Activated T-helper 1 cell treated with anti-CD3 and anti-CD28 coated beads, Interleukin-12 subunit alpha, Interleukin-12 subunit beta, Interleukin-2, Interleukin-4 antibody, amounts not matched to agents 30 ng/mL and 10 ng/mL and 1 ng/mL, durations not matched to agents 14 hours and 24 hours and 36 hours (primary cell): ENCODE measurements at regions of chr14 and their contacts with region 1.

Region 1: DNA sequence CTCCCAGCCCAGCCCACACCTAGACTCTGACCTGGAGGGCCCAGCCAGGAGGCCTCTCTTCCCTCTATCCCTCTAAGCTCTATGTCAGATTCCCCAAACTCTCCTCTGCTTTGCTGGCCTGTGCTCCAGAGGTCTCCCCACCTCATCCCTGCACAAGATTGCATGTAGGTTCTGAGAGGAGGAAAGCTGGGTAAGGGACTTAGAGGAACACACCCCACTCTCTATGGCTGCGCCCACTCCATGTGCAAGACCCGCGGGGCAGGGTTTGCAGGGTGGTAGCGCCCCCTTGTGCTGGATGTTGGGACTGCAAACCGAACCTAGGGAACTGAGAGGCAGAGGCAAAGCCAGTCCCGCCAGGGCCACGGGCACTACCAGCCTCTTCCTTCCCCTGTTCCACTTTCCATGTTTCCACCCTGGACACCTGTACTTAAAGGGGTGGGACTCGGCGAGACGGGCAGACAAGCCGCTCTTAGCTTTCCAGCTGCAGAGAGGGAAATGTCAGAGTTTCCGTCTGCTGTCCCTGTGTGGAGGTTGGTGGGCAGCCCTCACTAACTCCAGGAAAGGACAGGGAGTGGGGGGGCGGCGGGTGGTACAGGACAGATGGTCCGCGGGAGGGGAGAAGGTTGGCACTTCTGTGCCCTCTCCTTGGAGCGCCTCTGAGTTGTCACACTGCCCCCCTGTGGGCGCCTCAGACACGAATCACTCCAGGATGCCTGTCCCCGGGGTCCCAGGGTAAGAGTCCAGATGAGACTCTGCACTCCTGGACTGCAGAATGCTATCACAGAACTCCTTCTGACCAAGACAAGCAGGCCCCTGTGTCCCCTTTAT is 16.8 kb downstream of the MMP14 start:
- DNase-seq: peak; percentile 80
- H3K4me3 Mint-ChIP-seq: peak overlapping the region; percentile 81
- H3K27ac Mint-ChIP-seq: peak overlapping the region; percentile 82
- H3K4me1 Mint-ChIP-seq: peaks cover 42% of the 10 kb centered on the region
- H3K27me3 Mint-ChIP-seq: peaks cover 13% of the 10 kb centered on the region

Region 2: GRCh38 chr14:21868442-21869046 is 984.6 kb before region 1 on chr14:
- intact Hi-C with region 1: loop called (anchors 10 kb)
- DNase-seq: peak; percentile 72
- H3K4me3 Mint-ChIP-seq: peak overlapping the region; percentile 74
- H3K27ac Mint-ChIP-seq: peak overlapping the region; percentile 46
- H3K4me1 Mint-ChIP-seq: peaks cover 23% of the 10 kb centered on the region
- H3K27me3 Mint-ChIP-seq: peaks cover 5% of the 10 kb centered on the region

Region 3: DNA sequence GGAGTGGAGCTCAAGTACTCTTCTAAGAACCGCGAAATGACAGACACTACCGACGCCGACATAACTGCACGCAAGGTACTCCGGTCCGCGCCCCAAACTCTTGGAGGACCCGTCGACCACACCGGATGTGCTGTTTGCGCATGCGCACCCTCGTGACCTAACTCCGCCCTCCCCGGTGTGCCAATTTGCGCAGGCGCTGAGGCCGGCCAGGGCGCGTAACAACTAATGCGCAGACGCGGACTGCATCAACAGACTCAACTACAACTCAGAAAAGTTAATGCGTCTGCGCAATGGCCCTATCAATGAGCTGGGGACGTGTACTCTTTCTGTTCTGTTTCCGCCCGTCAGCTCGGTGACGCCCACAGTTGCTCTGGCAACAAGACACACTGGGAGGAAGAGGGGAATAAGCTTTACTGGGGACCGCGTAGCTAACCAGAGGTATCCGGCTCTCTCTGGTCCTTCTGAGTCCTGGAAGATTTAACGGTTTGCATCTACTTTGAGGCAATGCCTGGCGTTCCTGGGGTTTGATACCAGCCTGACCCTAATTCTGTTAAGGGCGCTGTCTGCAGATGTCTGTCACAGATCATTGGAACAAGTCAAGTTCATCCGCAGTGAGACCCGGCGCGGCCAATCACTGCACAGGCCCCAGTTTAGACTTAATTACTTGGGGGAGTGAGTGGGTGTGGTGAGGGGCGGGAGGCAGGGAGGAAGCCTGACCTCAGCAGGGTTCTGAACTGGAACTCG is 263.9 kb before region 1 on chr14 and contains the start of gene DAD1:
- intact Hi-C with region 1: loop called (anchors 5 kb)
- DNase-seq: peak; percentile 100
- H3K4me3 Mint-ChIP-seq: peak within 1 kb of the TSS; percentile 91
- H3K27ac Mint-ChIP-seq: peak within 1 kb of the TSS; percentile 96
- H3K4me1 Mint-ChIP-seq: peaks cover 55% of the 10 kb centered on the region
- H3K27me3 Mint-ChIP-seq: no peaks in the 10 kb centered on the region
- total RNA-seq, gene DAD1: 228 and 229 TPM in 2 replicates

Region 4: GRCh38 chr14:22715186-22715812 is 137.9 kb before region 1 on chr14:
- intact Hi-C with region 1: loop called (anchors 1 kb)
- DNase-seq: no peak
- H3K4me3 Mint-ChIP-seq: no peak overlapping the region
- H3K27ac Mint-ChIP-seq: no peak overlapping the region
- H3K4me1 Mint-ChIP-seq: peaks cover 17% of the 10 kb centered on the region
- H3K27me3 Mint-ChIP-seq: peaks cover 24% of the 10 kb centered on the region

Region 5: GRCh38 chr14:22822571-22823098 is 30.5 kb before region 1 on chr14:
- intact Hi-C with region 1: loop called (anchors 1 kb)
- DNase-seq: peak; percentile 52
- H3K4me3 Mint-ChIP-seq: peak overlapping the region; percentile 60
- H3K27ac Mint-ChIP-seq: no peak overlapping the region
- H3K4me1 Mint-ChIP-seq: peaks cover 35% of the 10 kb centered on the region
- H3K27me3 Mint-ChIP-seq: peaks cover 8% of the 10 kb centered on the region

Region 6: DNA sequence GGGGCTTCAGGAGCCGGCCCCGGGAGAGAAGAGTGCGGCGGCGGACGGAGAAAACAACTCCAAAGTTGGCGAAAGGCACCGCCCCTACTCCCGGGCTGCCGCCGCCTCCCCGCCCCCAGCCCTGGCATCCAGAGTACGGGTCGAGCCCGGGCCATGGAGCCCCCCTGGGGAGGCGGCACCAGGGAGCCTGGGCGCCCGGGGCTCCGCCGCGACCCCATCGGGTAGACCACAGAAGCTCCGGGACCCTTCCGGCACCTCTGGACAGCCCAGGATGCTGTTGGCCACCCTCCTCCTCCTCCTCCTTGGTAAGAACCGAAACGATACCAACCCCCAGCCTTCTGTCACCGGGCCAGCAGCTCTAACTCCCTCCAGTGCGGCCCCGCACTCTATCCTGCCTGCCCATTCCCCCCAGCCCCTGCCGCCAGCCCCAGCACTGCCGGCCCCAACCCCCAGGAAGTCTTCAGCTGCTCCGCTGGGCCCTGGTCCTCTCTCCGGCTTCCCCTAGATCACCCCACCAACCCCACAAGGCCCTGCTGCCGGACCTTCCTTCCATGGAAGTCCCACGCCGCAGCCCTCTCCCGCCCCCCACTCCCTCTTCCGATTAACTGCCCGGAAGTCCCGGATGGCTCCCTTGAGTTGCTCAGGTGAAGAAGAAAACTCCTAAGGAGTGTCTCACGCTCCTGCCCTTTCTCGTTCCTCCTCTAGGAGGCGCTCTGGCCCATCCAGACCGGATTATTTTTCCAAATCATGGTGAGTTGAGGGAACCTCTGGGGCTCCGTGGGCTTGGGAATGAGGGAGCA is 19.1 kb after region 1 on chr14:
- intact Hi-C with region 1: loop called (anchors 1 kb)
- DNase-seq: peak; percentile 63
- H3K4me3 Mint-ChIP-seq: peak overlapping the region; percentile 91
- H3K27ac Mint-ChIP-seq: peak overlapping the region; percentile 80
- H3K4me1 Mint-ChIP-seq: peaks cover 22% of the 10 kb centered on the region
- H3K27me3 Mint-ChIP-seq: no peaks in the 10 kb centered on the region